ENCODE measurements at regions of chr15 and their contacts with region 1.

Region 1: GRCh38 chr15:99250494-99251435 is 516 bp upstream of the LRRC28 start:
- DNase-seq: peak; percentile 99
- ATAC-seq: peak; percentile 95
- H3K4me3 ChIP-seq: peak overlapping the region; percentile 97
- H3K27ac ChIP-seq: peak overlapping the region; percentile 79
- H3K4me1 ChIP-seq: peaks cover 5% of the 10 kb centered on the region
- H3K27me3 ChIP-seq: no peaks in the 10 kb centered on the region
- CTCF ChIP-seq: no peak
- POLR2A ChIP-seq: peak; percentile 94
- RAD21 ChIP-seq: no peak

Region 2: GRCh38 chr15:100111103-100112060 is 860.6 kb after region 1 on chr15:
- CTCF ChIA-PET with region 1: no interaction called
- POLR2A ChIA-PET with region 1: no interaction called
- dilution Hi-C with region 1: no loop called
- in situ Hi-C with region 1: loop called (anchors 25 kb)
- intact Hi-C with region 1: no loop called
- DNase-seq: peak; percentile 88
- ATAC-seq: peak; percentile 68
- H3K4me3 ChIP-seq: no peak overlapping the region
- H3K27ac ChIP-seq: peak overlapping the region; percentile 50
- H3K4me1 ChIP-seq: peaks cover 32% of the 10 kb centered on the region
- H3K27me3 ChIP-seq: no peaks in the 10 kb centered on the region
- CTCF ChIP-seq: no peak
- POLR2A ChIP-seq: no peak
- RAD21 ChIP-seq: no peak

Region 3: GRCh38 chr15:100596792-100597191 is 1346.0 kb after region 1 on chr15:
- CTCF ChIA-PET with region 1: no interaction called
- POLR2A ChIA-PET with region 1: no interaction called
- dilution Hi-C with region 1: no loop called
- in situ Hi-C with region 1: loop called (anchors 25 kb)
- intact Hi-C with region 1: no loop called
- DNase-seq: no peak
- ATAC-seq: no peak
- H3K4me3 ChIP-seq: no peak overlapping the region
- H3K27ac ChIP-seq: no peak overlapping the region
- H3K4me1 ChIP-seq: peaks cover 2% of the 10 kb centered on the region; the same call in 1 of the 2 replicates
- H3K27me3 ChIP-seq: no peaks in the 10 kb centered on the region
- CTCF ChIP-seq: no peak
- POLR2A ChIP-seq: no peak
- RAD21 ChIP-seq: no peak

Measured in IMR-90 (cell line).